Colonic mucosa (tissue), 4 donors: ENCODE measurements at regions of chr10 and their contacts with region 1.

Region 1: GRCh38 chr10:70146489-70147258 is at the start of gene TYSND1:
- DNase-seq: peak; percentile 99
- H3K4me3 ChIP-seq: peak within 1 kb of the TSS; percentile 56
- H3K27ac ChIP-seq: peak within 1 kb of the TSS; percentile 86
- H3K4me1 ChIP-seq: peaks cover 10% of the 10 kb centered on the region
- H3K27me3 ChIP-seq: no peaks in the 10 kb centered on the region
- CTCF ChIP-seq: peak; percentile 74
- total RNA-seq, gene TYSND1: 13.1 to 23.8 TPM

Region 2: GRCh38 chr10:69957886-69958555 is 188.7 kb before region 1 on chr10:
- intact Hi-C with region 1: no loop called
- DNase-seq: peak; percentile 39
- H3K4me3 ChIP-seq: no peak overlapping the region
- H3K27ac ChIP-seq: no peak overlapping the region
- H3K4me1 ChIP-seq: no peaks in the 10 kb centered on the region
- H3K27me3 ChIP-seq: no peaks in the 10 kb centered on the region
- CTCF ChIP-seq: peak; percentile 68

Region 3: GRCh38 chr10:70093335-70093944 is 53.2 kb before region 1 on chr10:
- intact Hi-C with region 1: no loop called
- DNase-seq: no peak
- H3K4me3 ChIP-seq: no peak overlapping the region
- H3K27ac ChIP-seq: no peak overlapping the region
- H3K4me1 ChIP-seq: no peaks in the 10 kb centered on the region
- H3K27me3 ChIP-seq: no peaks in the 10 kb centered on the region
- CTCF ChIP-seq: no peak

Region 4: DNA sequence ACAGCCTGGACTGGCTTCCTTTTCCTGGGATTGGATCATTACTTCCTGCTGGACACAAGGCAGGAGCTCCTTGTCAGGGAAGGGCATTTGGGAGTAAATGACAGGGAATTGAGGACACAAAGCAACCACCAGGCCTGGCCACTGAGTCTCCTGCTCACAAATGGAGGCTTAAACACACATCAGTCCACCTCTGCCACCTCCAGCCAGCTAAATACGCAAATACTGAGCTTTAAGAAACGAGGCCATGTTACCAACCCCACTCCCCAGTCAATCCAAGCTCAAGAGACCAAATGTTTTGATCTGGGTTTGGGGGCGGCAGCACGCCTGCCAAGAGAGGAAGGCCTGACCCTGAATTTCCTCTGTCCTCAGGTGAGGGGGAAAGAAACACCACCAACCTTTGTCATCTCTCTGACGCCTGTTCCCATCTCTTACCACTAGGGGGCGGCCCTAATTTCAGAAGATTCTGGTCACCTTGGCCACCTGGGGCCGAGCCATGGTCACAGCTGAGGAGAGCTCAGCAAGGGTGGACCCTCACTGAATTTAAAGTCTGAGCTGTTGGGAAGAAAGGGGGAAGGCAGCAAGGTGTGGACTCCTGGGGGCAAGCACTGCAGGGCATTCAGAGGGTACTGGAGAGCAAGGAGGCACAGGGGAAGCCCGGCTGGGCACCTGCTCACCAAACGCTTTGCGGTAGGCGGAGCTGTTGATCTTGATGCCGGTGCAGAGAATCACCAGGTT is 30.6 kb before region 1 on chr10:
- intact Hi-C with region 1: loop called (anchors 2 kb)
- DNase-seq: peak; percentile 68
- H3K4me3 ChIP-seq: no peak overlapping the region
- H3K27ac ChIP-seq: no peak overlapping the region
- H3K4me1 ChIP-seq: no peaks in the 10 kb centered on the region
- H3K27me3 ChIP-seq: no peaks in the 10 kb centered on the region
- CTCF ChIP-seq: peak; percentile 85

Region 5: DNA sequence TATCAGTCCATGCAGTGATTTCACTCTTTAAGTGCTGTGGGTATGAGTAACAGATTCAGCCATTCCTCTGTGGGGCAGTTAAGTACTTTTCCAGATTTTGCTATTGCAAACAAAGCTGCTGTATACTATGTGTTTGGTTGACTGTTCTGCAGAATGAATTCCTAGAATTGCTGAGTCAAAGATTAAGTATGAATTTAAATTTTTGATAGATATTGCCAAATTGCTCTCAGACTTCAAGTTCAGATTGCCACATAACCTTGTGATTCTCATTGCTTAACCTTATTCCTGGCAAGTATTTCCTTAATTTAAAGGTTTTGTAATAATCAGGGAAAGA is 45.3 kb after region 1 on chr10:
- intact Hi-C with region 1: no loop called
- DNase-seq: no peak
- H3K4me3 ChIP-seq: no peak overlapping the region
- H3K27ac ChIP-seq: no peak overlapping the region
- H3K4me1 ChIP-seq: no peaks in the 10 kb centered on the region
- H3K27me3 ChIP-seq: no peaks in the 10 kb centered on the region
- CTCF ChIP-seq: no peak